PC-3 (cell line): ENCODE measurements at regions of chr19 and their contacts with region 1.

Region 1: DNA sequence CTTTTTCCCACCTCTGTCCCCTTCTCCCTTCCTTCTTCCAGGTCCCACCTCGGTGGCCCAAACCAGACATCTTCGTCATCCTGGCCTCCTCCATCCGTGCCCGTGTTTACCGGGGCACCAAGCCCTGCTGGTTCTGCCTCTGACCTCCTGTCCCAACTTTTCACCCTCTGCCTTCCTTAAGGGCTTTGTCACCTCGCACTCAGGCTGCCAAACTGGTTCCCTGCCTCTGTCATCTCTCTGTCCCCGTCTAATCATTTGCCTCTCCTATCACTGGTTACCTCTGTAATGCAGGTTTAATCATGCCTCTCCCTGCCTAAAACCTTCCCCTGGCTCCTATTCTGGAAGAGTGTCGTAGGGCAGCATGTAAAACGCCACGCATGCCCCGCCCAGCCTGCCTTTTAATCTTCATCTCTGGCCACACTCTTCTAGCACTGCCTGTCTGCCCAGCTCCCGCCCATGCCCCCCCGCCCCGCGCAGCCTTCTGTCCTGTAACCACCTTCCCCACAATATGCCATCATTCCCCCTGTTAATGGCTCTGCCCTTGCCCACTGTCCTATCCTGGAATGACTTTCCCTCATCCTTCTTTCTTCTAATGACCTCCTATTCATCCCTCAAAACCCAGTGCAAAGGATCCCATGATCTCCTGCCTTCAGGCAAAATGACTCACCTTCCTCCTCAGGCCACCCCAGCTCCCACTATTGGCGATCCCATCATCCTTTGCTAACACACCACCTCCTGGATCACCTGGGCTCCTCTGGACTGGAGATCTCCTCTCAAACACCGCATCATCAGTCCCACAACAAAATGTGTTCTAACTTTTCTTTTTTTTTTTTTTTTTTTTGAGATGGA is 66.7 kb downstream of the PEX11G start:
- DNase-seq: peak; percentile 38
- ATAC-seq: peak; percentile 12; the same call in 1 of the 2 replicates
- H3K4me3 ChIP-seq: no peak overlapping the region
- H3K27ac ChIP-seq: no peak overlapping the region
- H3K4me1 ChIP-seq: peaks cover 11% of the 10 kb centered on the region
- H3K27me3 ChIP-seq: no peaks in the 10 kb centered on the region
- CTCF ChIP-seq: no peak

Region 2: DNA sequence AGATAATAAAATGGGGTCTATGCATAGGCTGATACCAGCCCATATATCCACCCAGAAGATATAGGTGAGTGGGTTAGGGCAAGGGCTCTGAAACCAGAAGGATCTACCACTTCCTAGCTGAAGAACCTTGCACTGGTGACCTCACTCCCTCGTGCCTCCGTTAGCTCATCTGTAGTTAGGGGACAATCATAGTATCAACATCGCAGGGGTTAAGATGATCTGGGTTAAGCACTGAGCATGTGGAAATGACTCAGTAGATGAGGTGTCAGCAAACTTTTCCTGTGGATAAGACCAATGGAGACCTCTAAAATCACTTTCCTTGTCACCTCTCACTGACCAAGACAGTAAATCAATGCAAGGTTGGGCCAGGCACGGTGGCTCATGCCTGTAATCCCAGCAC is 782.7 kb before region 1 on chr19:
- CTCF ChIA-PET with region 1: no interaction called
- POLR2A ChIA-PET with region 1: no interaction called
- intact Hi-C with region 1: no loop called
- DNase-seq: peak; percentile 63
- ATAC-seq: peak; percentile 66
- H3K4me3 ChIP-seq: no peak overlapping the region
- H3K27ac ChIP-seq: no peak overlapping the region
- H3K4me1 ChIP-seq: peaks cover 5% of the 10 kb centered on the region; the same call in 1 of the 2 replicates
- H3K27me3 ChIP-seq: no peaks in the 10 kb centered on the region
- CTCF ChIP-seq: no peak

Region 3: GRCh38 chr19:7340959-7341837 is 80.9 kb before region 1 on chr19:
- CTCF ChIA-PET with region 1: interaction called, 11 read pairs
- POLR2A ChIA-PET with region 1: no interaction called
- intact Hi-C with region 1: no loop called
- DNase-seq: peak; percentile 92
- ATAC-seq: peak; percentile 59
- H3K4me3 ChIP-seq: peak overlapping the region; percentile 6; the same call in 1 of the 2 replicates
- H3K27ac ChIP-seq: no peak overlapping the region
- H3K4me1 ChIP-seq: 0 out of 2 replicates have a peak, but pooled peaks cover 7% of the 10 kb centered on the region
- H3K27me3 ChIP-seq: no peaks in the 10 kb centered on the region; the same call in 1 of the 2 replicates
- CTCF ChIP-seq: peak; percentile 97